CD8-positive, alpha-beta T cell (primary cell): ENCODE measurements at regions of chr4 and their contacts with region 1.

Region 1: DNA sequence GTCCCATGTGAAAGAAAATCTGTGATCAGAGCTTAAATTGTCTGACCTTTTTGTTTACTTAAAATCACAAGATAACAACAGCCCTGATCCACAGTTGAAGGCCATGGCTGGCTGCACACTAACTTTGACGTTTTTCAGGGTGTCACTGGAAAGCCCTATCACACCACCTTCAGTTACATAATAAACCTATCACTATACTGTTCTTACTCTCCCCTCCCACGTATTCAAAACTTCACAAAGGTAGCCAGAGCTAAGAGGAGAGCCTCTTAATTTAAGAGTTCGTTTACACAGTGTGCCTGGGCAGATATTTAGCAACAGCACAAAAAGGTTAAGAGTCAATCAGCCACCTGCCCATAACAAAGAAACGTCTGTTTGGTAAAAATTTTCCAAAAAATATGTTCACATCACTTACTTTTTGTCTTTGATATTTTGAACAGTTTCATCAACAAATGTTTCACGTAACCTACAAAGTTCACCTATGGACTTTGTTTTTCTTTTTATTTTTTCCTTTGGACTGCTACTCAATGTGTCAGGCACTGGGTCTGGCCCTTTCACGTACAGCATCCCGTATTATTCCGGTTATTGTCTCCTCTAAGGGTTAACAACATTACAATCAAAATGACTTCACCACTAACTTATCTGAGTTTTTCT is 25.0 kb downstream of the RFC1 start:
- DNase-seq: no peak
- ATAC-seq: no peak
- H3K4me3 ChIP-seq: no peak overlapping the region
- H3K4me3 Mint-ChIP-seq: no peak overlapping the region
- H3K27ac ChIP-seq: no peak overlapping the region
- H3K27ac Mint-ChIP-seq: no peak overlapping the region
- H3K4me1 ChIP-seq: no peaks in the 10 kb centered on the region
- H3K4me1 Mint-ChIP-seq: peaks cover 35% of the 10 kb centered on the region
- H3K27me3 ChIP-seq: no peaks in the 10 kb centered on the region
- H3K27me3 Mint-ChIP-seq: no peaks in the 10 kb centered on the region
- CTCF ChIP-seq: no peak

Region 2: DNA sequence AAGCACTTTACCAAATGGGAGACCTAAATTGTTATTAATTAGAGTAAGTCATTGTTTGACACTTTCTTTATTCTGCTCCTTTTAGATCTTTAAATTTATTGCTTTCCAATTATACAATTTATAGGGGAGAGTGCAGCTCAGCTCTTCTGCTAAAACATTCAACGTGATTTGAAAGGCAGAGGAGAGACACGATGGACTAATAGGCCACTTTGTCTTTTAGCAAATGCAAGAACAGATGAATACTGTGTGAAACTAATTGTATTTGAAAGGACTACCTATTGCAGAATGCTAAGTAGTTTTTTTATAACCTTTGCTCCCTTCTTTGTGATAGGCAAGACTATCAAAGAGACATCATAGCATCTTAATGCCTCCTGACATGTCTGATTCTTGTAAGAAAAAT is 997.6 kb before region 1 on chr4:
- CTCF ChIA-PET with region 1: no interaction called
- POLR2A ChIA-PET with region 1: no interaction called
- intact Hi-C with region 1: no loop called
- DNase-seq: no peak
- ATAC-seq: no peak
- H3K4me3 ChIP-seq: no peak overlapping the region
- H3K4me3 Mint-ChIP-seq: no peak overlapping the region
- H3K27ac ChIP-seq: no peak overlapping the region
- H3K27ac Mint-ChIP-seq: no peak overlapping the region
- H3K4me1 ChIP-seq: no peaks in the 10 kb centered on the region
- H3K4me1 Mint-ChIP-seq: no peaks in the 10 kb centered on the region
- H3K27me3 ChIP-seq: no peaks in the 10 kb centered on the region
- H3K27me3 Mint-ChIP-seq: no peaks in the 10 kb centered on the region
- CTCF ChIP-seq: no peak

Region 3: DNA sequence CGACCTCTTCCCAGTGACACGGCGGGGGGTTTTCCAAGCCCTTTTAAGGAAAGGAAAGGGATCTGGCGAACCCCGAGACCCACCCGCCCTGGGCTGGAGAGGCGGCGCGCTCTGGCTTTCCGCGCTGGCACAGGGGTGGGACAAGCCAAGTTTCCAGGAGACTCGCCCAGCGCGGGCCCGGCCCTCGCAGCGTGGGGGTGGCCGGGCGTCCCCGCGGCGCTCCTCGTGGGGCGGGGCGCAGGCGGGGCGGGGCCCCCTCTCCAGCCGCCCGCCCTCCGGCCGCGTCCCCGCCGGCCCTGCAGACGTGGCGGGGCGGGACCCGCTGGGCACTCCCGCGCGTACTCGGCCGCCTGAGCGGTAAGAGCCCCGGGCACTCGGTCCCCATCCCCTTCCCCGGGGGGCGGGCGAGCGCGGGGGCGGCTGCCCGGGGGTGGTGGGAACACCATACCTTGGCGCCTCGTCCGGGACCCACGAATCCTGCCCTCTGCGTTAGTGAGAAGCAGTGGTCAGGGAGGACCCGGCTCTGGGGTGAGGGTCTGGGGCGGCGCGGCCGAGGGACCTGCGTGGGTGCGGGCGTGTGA is 473.6 kb before region 1 on chr4 and contains the start of gene FAM114A1:
- CTCF ChIA-PET with region 1: no interaction called
- POLR2A ChIA-PET with region 1: no interaction called
- intact Hi-C with region 1: no loop called
- DNase-seq: peak in 3 of 9 experiments; percentile 13 to 28 (median 28)
- ATAC-seq: peak; percentile 36
- H3K4me3 ChIP-seq: peak within 1 kb of the TSS in 1 of 2 experiments; percentile 13
- H3K4me3 Mint-ChIP-seq: peak within 1 kb of the TSS; percentile 76
- H3K27ac ChIP-seq: no peak within 1 kb of the TSS
- H3K27ac Mint-ChIP-seq: no peak within 1 kb of the TSS
- H3K4me1 ChIP-seq: peaks cover 4% of the 10 kb centered on the region
- H3K4me1 Mint-ChIP-seq: peaks cover 16% of the 10 kb centered on the region
- H3K27me3 ChIP-seq: peaks cover 0 to 7% of the 10 kb centered on the region in 2 experiments
- H3K27me3 Mint-ChIP-seq: peaks cover 26% of the 10 kb centered on the region
- CTCF ChIP-seq: no peak
- total RNA-seq, gene FAM114A1: not detected

Region 4: DNA sequence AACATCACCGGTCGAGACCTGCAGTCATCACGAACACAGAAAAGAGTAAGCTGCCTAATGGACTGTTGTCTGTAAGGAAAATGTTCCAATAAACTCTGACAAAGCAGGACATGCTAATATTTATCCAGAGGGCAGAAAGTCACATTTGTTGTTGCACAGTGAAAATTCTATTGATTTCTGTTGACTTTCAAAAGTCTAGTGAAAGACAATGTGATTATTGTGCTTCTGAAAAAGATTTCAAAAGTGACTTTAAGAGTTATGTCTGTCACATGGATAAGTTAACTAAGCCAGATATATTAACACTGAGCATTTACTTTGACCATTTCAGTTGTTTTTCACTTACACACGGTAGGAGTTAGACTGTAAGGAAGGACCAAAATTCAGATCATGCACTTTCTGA is 34.3 kb after region 1 on chr4:
- CTCF ChIA-PET with region 1: no interaction called
- POLR2A ChIA-PET with region 1: no interaction called
- intact Hi-C with region 1: loop called in 1 of 2 experiments (anchors 5 kb)
- DNase-seq: no peak
- ATAC-seq: no peak
- H3K4me3 ChIP-seq: no peak overlapping the region
- H3K4me3 Mint-ChIP-seq: no peak overlapping the region
- H3K27ac ChIP-seq: no peak overlapping the region
- H3K27ac Mint-ChIP-seq: no peak overlapping the region
- H3K4me1 ChIP-seq: no peaks in the 10 kb centered on the region
- H3K4me1 Mint-ChIP-seq: no peaks in the 10 kb centered on the region
- H3K27me3 ChIP-seq: no peaks in the 10 kb centered on the region
- H3K27me3 Mint-ChIP-seq: peaks cover 13% of the 10 kb centered on the region
- CTCF ChIP-seq: no peak